Thyroid gland (tissue), 4 donors: ENCODE measurements at regions of chr1 and their contacts with region 1.

Region 1: GRCh38 chr1:172826096-172826743 is 167.3 kb downstream of the FASLG start:
- DNase-seq: peak; percentile 3 to 10
- H3K4me3 ChIP-seq: no peak overlapping the region
- H3K27ac ChIP-seq: peak overlapping the region; percentile 9 to 55 (median 46)
- H3K4me1 ChIP-seq: no peaks in the 10 kb centered on the region
- H3K27me3 ChIP-seq: no peaks in the 10 kb centered on the region
- CTCF ChIP-seq: peak in 5 of 6 experiments; percentile 30 to 50 (median 46)
- POLR2A ChIP-seq: no peak

Region 2: DNA sequence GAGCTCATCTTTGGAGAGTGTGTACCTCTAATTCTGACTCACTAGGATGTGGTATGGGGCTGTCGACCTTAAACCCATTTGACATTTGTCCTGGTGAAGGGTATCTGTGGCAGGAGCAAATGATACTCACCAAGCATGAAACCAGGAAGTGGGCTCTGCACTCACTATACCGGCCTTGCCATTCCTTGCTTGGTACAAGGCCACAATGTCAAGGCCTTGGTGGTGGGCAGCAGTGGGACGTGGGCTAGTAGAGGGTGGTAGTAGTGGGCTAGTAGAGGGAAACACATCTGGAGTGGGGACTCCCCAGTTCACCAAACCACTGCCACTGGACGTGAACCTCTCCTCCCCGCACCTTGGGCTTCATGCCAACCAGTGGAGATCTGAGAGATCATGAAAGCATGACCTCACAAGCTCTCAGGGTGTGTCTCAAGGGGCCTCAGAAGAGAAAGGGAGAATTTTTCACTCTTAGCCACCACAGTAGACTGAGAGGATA is 369.4 kb after region 1 on chr1:
- intact Hi-C with region 1: loop called (anchors 5 kb)
- DNase-seq: peak; percentile 37 to 42
- H3K4me3 ChIP-seq: no peak overlapping the region
- H3K27ac ChIP-seq: no peak overlapping the region
- H3K4me1 ChIP-seq: peaks cover 9 to 11% of the 10 kb centered on the region in 2 donors
- H3K27me3 ChIP-seq: no peaks in the 10 kb centered on the region
- CTCF ChIP-seq: no peak
- POLR2A ChIP-seq: no peak

Region 3: GRCh38 chr1:173202430-173203145 is 376.4 kb after region 1 on chr1:
- intact Hi-C with region 1: loop called (anchors 5 kb)
- DNase-seq: peak in 1 of 2 donors; percentile 4
- H3K4me3 ChIP-seq: no peak overlapping the region
- H3K27ac ChIP-seq: no peak overlapping the region
- H3K4me1 ChIP-seq: no peaks in the 10 kb centered on the region
- H3K27me3 ChIP-seq: no peaks in the 10 kb centered on the region
- CTCF ChIP-seq: peak; percentile 27 to 79 (median 54)
- POLR2A ChIP-seq: no peak